GM12878 (cell line): ENCODE measurements at regions of chr2 and their contacts with region 1.

Region 1: GRCh38 chr2:119826370-119826961 is 66.7 kb downstream of the PTPN4 start:
- DNase-seq: no peak
- ATAC-seq: peak; percentile 90
- H3K4me3 ChIP-seq: no peak overlapping the region
- H3K27ac ChIP-seq: no peak overlapping the region
- H3K4me1 ChIP-seq: no peaks in the 10 kb centered on the region
- H3K27me3 ChIP-seq: no peaks in the 10 kb centered on the region
- CTCF ChIP-seq: peak; percentile 65 to 75 (median 67)
- EP300 ChIP-seq: no peak
- POLR2A ChIP-seq: no peak
- RAD21 ChIP-seq: peak; percentile 60

Region 2: DNA sequence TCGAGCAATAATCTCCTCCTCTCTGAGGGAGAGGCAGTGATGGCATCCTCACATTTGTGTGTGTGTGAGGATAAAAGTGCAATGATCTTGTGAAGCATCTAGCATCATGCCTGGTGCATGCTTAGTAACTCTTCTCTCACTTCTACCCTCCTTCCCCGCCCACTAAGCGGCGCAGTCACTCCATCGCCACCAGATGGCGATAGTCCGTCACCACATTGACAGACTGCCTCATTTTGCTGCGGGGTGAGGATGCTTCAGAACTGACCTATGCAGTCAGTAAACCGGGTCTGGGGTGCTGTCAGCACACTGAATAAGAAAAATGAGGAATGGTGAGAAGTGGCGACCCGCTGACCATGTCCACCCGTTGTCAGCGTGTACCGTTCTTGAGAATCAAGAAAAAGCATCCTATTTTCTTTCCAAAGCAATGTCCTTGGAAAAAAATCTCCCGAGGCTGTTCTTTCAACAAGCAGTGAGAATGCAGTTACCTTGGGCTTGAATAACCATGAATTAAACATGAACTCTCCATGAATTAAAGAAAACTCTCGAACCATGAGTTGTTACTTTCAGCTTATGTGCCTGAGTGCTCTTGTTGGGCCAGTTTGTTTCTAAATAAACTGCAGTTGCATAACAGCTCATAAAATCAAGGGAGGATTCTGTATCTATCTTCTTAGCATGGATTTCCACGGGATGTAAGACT is 184.8 kb before region 1 on chr2:
- CTCF ChIA-PET with region 1: interaction called, 3 read pairs
- POLR2A ChIA-PET with region 1: no interaction called
- RAD21 ChIA-PET with region 1: interaction called, 3 read pairs
- SMC1A ChIA-PET with region 1: no interaction called
- in situ Hi-C with region 1: no loop called
- intact Hi-C with region 1: loop called (anchors 1 kb)
- DNase-seq: peak; percentile 40
- ATAC-seq: peak; percentile 99
- H3K4me3 ChIP-seq: no peak overlapping the region
- H3K27ac ChIP-seq: no peak overlapping the region
- H3K4me1 ChIP-seq: no peaks in the 10 kb centered on the region
- H3K27me3 ChIP-seq: no peaks in the 10 kb centered on the region; a peak in 1 of 4 replicates
- CTCF ChIP-seq: peak; percentile 97
- EP300 ChIP-seq: no peak
- POLR2A ChIP-seq: no peak
- RAD21 ChIP-seq: peak; percentile 88

Region 3: DNA sequence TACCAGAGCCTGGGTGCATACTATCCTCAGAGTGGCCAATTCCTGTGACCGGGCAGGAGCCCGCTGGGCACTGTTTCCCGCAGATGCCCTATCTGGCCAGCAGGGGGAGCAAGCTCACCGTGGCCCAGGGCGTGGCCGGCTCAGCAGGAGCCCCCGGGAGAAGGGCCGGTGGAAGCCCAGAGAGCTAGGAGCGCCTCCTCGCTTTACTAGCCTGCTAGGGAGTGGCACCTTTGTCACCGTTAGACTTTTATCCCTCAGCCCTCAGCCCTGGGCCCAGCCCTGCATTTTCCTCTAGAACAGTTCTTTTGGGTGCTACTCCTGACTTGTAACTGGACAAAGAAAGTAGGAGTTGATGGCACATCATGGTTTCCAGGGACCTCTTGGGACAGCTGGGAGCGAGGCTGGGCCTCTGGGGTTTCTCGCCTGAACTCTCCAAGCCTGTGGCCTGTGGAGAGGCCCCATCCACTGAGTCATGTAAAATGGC is 123.5 kb before region 1 on chr2:
- CTCF ChIA-PET with region 1: interaction called, 111 read pairs
- POLR2A ChIA-PET with region 1: no interaction called
- RAD21 ChIA-PET with region 1: interaction called, 3 read pairs
- SMC1A ChIA-PET with region 1: interaction called, 9 read pairs
- in situ Hi-C with region 1: loop called (anchors 5 kb)
- intact Hi-C with region 1: loop called (anchors 1 kb)
- DNase-seq: no peak
- ATAC-seq: peak; percentile 97
- H3K4me3 ChIP-seq: no peak overlapping the region
- H3K27ac ChIP-seq: no peak overlapping the region
- H3K4me1 ChIP-seq: peaks cover 14% of the 10 kb centered on the region
- H3K27me3 ChIP-seq: no peaks in the 10 kb centered on the region; a peak in 1 of 4 replicates
- CTCF ChIP-seq: peak; percentile 96 to 99 (median 98)
- EP300 ChIP-seq: no peak
- POLR2A ChIP-seq: no peak
- RAD21 ChIP-seq: peak; percentile 88

Region 4: DNA sequence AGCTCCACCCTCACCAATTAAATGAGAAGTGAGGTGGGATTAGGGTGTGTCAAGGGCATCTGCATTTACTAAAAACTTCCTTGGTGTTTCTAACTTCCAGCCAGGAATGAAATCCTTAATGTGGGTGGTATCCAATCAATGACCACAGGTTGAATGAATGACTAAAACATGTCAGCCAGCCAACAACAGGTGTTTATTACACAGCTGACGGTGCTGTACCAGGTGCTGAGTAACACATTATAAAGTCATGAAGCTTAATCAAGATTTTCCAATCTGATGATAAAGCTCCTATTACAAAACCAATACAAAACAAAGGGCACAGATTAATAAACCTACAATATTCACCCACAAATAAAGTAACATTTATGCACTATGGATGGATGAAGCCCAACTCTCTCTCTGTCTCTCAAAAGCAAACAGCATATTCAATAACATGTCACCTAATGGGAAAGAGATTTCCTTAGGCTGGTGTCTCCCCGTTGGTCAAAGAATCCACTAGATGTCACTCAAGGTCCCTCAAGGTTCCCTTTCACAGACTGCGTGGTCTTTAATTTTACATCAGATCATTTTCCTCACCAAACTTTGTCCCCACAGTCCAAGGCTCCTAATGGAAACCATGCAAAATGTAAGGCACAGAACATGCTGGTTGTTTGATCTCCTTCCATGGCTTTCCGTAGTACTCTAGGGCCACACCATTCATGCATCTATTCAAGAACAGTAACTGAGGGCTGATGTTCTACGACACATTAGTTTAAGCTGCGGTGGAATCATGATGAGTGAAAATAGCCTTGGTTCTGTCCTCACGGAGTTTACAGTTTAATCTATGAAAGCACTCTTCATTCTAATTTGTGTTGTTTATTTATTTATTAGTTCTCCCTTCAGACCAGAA is 73.2 kb before region 1 on chr2:
- CTCF ChIA-PET with region 1: interaction called, 81 read pairs
- POLR2A ChIA-PET with region 1: no interaction called
- RAD21 ChIA-PET with region 1: interaction called, 9 read pairs
- SMC1A ChIA-PET with region 1: interaction called, 43 read pairs
- in situ Hi-C with region 1: no loop called
- intact Hi-C with region 1: loop called (anchors 1 kb)
- DNase-seq: no peak
- ATAC-seq: peak; percentile 91
- H3K4me3 ChIP-seq: no peak overlapping the region
- H3K27ac ChIP-seq: no peak overlapping the region
- H3K4me1 ChIP-seq: no peaks in the 10 kb centered on the region
- H3K27me3 ChIP-seq: peaks cover 0 to 5% of the 10 kb centered on the region in 2 experiments; a peak in 1 of 4 replicates
- CTCF ChIP-seq: peak; percentile 68 to 81 (median 73)
- EP300 ChIP-seq: no peak
- POLR2A ChIP-seq: no peak
- RAD21 ChIP-seq: peak; percentile 92

Region 5: DNA sequence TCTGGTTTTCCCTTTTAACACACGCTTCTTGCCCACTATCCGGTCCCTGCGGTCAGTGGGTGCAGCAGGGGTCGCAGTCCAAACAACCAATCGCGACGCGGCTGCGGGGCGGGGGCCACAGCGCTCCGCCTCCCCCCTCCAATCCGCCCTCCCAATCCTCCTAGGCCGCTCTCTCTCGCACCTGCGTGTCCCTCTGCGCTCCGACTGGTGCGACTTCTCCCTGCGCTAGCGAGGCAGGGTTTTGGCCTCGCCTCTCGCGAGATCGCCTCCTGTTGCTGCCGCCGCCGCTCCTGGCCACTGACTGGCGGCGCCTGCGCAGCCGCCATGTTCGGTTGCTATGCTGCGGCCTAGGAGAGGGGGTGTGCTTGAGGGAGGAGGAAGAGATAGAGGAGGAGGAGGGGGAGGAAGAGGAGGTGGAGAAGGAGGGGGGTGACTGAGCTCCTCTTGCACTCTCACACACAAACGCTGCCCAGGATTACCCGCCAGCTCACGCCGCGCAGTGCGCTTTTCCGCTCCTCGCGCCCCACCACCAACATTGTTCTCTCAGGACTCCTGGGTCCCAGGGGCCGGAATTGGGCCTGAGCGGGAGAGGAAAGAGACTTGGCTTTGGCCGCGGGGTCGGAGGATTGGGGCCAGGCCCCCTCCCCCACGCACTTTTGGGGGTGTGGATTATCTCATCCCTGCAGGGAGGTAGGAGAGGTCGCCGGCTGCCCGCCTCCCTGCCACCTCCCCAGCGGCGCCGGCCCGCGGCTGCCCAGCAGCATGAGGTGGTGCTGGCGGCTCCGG is 66.8 kb before region 1 on chr2 and contains the start of gene PTPN4:
- CTCF ChIA-PET with region 1: interaction called, 81 read pairs
- POLR2A ChIA-PET with region 1: no interaction called
- RAD21 ChIA-PET with region 1: interaction called, 9 read pairs
- SMC1A ChIA-PET with region 1: interaction called, 43 read pairs
- in situ Hi-C with region 1: no loop called
- intact Hi-C with region 1: loop called (anchors 2 kb)
- DNase-seq: peak; percentile 95
- ATAC-seq: peak; percentile 93
- H3K4me3 ChIP-seq: peak within 1 kb of the TSS; percentile 98
- H3K27ac ChIP-seq: peak within 1 kb of the TSS; percentile 85
- H3K4me1 ChIP-seq: no peaks in the 10 kb centered on the region
- H3K27me3 ChIP-seq: no peaks in the 10 kb centered on the region; a peak in 1 of 4 replicates
- CTCF ChIP-seq: no peak; a peak in 1 of 6 replicates
- EP300 ChIP-seq: peak in 1 of 2 experiments; percentile 21; a peak in 1 of 4 replicates
- POLR2A ChIP-seq: peak; percentile 94
- RAD21 ChIP-seq: 0 out of 2 replicates have a peak, but pooled peaks have one; percentile 3
- polyA plus RNA-seq, gene PTPN4: 5.0 to 7.4 TPM

Region 6: GRCh38 chr2:119856469-119856912 is 30.0 kb after region 1 on chr2:
- CTCF ChIA-PET with region 1: no interaction called
- POLR2A ChIA-PET with region 1: no interaction called
- RAD21 ChIA-PET with region 1: no interaction called
- SMC1A ChIA-PET with region 1: no interaction called
- in situ Hi-C with region 1: no loop called
- intact Hi-C with region 1: no loop called
- DNase-seq: no peak
- ATAC-seq: no peak
- H3K4me3 ChIP-seq: no peak overlapping the region
- H3K27ac ChIP-seq: no peak overlapping the region
- H3K4me1 ChIP-seq: peaks cover 7% of the 10 kb centered on the region; the same call in 1 of the 2 replicates
- H3K27me3 ChIP-seq: no peaks in the 10 kb centered on the region
- CTCF ChIP-seq: no peak
- EP300 ChIP-seq: no peak
- POLR2A ChIP-seq: no peak
- RAD21 ChIP-seq: no peak

Region 7: DNA sequence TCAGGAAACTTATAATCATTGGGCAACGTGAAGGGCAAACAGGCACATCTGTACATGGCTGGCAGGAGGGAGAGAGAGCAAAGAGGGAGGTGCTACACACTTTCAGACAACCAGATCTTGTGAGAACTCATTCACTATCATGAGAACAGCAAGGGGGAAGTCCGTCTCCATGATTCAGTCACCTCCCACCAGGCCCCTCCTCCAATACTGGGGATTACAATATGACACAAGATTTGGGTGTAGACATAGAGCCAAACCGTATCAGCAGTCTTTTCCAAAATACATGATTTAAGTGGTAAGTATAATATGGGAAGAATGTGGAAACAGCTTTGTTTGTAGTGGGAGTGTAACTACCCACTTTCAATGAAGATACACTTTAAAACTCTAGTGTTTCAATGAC is 251.4 kb after region 1 on chr2:
- CTCF ChIA-PET with region 1: no interaction called
- POLR2A ChIA-PET with region 1: no interaction called
- RAD21 ChIA-PET with region 1: no interaction called
- SMC1A ChIA-PET with region 1: no interaction called
- in situ Hi-C with region 1: no loop called
- intact Hi-C with region 1: no loop called
- DNase-seq: no peak
- ATAC-seq: no peak
- H3K4me3 ChIP-seq: no peak overlapping the region
- H3K27ac ChIP-seq: no peak overlapping the region
- H3K4me1 ChIP-seq: no peaks in the 10 kb centered on the region
- H3K27me3 ChIP-seq: no peaks in the 10 kb centered on the region
- CTCF ChIP-seq: no peak
- EP300 ChIP-seq: no peak
- POLR2A ChIP-seq: no peak
- RAD21 ChIP-seq: no peak